A549 (cell line): ENCODE measurements at regions of chr19 and their contacts with region 1.

Region 1: DNA sequence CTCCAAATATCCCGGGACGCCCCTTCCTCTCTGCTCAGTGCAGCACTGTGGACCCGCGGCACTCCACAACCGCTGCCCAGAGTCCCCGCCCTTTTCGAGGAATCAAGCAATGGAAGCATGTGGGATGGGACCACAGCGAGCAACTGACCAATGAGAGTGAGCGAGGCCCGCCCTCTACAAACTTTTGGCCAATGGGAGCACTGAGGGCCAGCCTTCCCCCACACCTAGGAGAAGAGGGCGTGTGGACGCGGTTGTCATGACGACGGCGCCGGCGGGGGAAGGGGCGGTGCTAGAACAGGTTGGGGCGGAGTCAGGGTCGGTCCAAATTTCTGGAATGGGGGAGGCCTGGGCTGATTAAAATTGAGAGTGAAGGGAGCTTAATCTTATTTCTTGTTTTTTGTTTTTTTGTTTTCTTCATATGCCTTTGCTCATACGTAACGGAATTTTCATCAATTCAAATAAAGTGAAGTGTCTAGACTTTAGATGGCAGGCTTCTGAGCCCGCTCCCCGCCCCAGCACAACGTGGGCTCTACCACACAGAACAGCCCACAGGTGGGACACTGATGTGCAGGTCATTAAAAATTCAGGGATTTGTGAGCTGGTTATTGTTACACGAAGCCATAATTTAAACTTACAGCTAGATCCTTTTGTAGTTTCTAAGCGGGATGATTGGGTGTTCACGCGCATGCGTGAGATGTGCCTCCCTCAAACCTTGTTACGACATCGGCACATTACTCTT is at the start of gene DNAAF3:
- DNase-seq: peak; percentile 99 to 100
- ATAC-seq: peak; percentile 96 to 97
- H3K4me3 ChIP-seq: peak within 1 kb of the TSS; percentile 64
- H3K27ac ChIP-seq: peak within 1 kb of the TSS; percentile 62 to 81
- H3K4me1 ChIP-seq: peaks cover 10% of the 10 kb centered on the region; the same call in 1 of the 3 replicates
- CTCF ChIP-seq: no peak
- EP300 ChIP-seq: no peak
- POLR2A ChIP-seq: no peak
- RAD21 ChIP-seq: no peak
- polyA plus RNA-seq, gene DNAAF3: 3.1 and 4.0 TPM in 2 replicates

Region 2: DNA sequence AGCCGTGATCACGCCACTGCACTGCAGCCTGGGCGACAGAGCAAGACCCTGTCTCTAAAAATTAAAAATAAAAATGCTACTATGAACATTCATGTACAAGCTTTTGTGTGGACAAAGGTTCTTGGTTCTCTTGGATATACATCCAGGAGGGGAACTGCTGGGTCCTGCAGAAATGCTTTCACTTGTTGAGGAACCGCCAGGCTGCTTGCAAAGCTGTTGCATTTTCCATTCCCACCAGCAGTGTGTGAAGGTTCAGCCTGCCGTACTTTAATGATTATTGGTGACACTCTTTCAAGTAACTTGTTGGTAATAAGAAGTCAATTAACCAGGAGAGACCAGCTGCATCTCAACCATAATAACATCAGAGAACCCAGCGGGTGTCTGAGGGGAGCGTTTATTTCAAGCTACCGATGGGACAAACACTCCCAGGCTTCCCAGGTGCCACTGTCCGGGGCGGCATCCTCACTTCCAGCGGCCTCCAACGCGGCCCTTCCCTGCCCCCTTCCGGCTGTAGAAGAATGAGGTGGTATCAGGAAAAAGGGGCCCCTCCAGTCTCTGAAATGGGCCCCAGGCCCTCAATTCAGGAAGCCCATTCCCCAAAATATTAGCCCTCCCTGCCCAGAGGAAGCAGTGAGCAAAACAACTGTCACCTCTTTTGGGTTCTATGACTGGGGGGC is 34.1 kb before region 1 on chr19:
- CTCF ChIA-PET with region 1: interaction called, 13 read pairs
- POLR2A ChIA-PET with region 1: no interaction called
- DNase-seq: no peak
- ATAC-seq: no peak
- H3K4me3 ChIP-seq: no peak overlapping the region
- H3K27ac ChIP-seq: no peak overlapping the region
- H3K4me1 ChIP-seq: no peaks in the 10 kb centered on the region
- CTCF ChIP-seq: no peak
- EP300 ChIP-seq: no peak
- POLR2A ChIP-seq: no peak
- RAD21 ChIP-seq: no peak

Region 3: DNA sequence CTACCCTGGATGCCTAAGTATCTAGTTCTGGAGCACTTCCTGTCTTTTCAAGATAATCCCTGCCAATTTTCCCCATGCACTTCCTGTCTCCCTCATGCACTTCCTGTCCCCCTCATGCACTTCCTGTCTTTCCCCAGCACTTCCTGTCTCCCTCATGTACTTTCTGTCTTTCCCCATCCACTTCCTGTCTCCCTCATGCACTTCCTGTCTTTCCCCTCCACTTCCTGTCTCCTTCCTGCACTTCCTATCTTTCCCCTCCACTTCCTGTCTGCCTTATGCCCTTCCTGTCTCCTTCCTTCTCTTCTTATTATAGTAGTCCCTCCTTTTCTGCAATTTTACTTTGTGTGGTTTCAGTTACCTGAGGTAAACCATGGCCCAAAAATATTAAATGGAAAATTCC is 14.7 kb before region 1 on chr19:
- CTCF ChIA-PET with region 1: interaction called, 29 read pairs
- POLR2A ChIA-PET with region 1: interaction called, 9 read pairs
- DNase-seq: peak in 1 of 2 experiments; percentile 55
- ATAC-seq: no peak
- H3K4me3 ChIP-seq: no peak overlapping the region
- H3K27ac ChIP-seq: peak overlapping the region in 1 of 2 experiments; percentile 56; a peak in 2 of 6 replicates
- H3K4me1 ChIP-seq: peaks cover 29% of the 10 kb centered on the region
- CTCF ChIP-seq: no peak
- EP300 ChIP-seq: no peak
- POLR2A ChIP-seq: no peak
- RAD21 ChIP-seq: no peak

Region 4: GRCh38 chr19:55178781-55179599 is 12.3 kb after region 1 on chr19:
- CTCF ChIA-PET with region 1: interaction called, 64 read pairs
- POLR2A ChIA-PET with region 1: no interaction called
- DNase-seq: peak; percentile 91
- ATAC-seq: peak; percentile 74 to 80
- H3K4me3 ChIP-seq: peak overlapping the region; percentile 26
- H3K27ac ChIP-seq: no peak overlapping the region; a peak in 1 of 6 replicates
- H3K4me1 ChIP-seq: peaks cover 17% of the 10 kb centered on the region
- CTCF ChIP-seq: no peak
- EP300 ChIP-seq: no peak
- POLR2A ChIP-seq: no peak
- RAD21 ChIP-seq: no peak

Region 5: GRCh38 chr19:55197531-55197930 is 30.8 kb after region 1 on chr19:
- CTCF ChIA-PET with region 1: interaction called, 14 read pairs
- POLR2A ChIA-PET with region 1: no interaction called
- DNase-seq: peak in 1 of 2 experiments; percentile 63
- ATAC-seq: peak; percentile 68 to 78
- H3K4me3 ChIP-seq: no peak overlapping the region
- H3K27ac ChIP-seq: no peak overlapping the region
- H3K4me1 ChIP-seq: no peaks in the 10 kb centered on the region
- CTCF ChIP-seq: no peak
- EP300 ChIP-seq: no peak
- POLR2A ChIP-seq: no peak
- RAD21 ChIP-seq: no peak

Region 6: GRCh38 chr19:55258828-55259539 is 92.3 kb after region 1 on chr19 and contains the start of gene PPP6R1:
- CTCF ChIA-PET with region 1: interaction called, 11 read pairs
- POLR2A ChIA-PET with region 1: interaction called, 3 read pairs
- DNase-seq: peak; percentile 99 to 100
- ATAC-seq: peak; percentile 83 to 93
- H3K4me3 ChIP-seq: peak within 1 kb of the TSS; percentile 81
- H3K27ac ChIP-seq: peak within 1 kb of the TSS; percentile 87 to 95
- H3K4me1 ChIP-seq: peaks cover 36% of the 10 kb centered on the region
- CTCF ChIP-seq: no peak
- EP300 ChIP-seq: peak in 1 of 2 experiments; percentile 31; a peak in 1 of 5 replicates
- POLR2A ChIP-seq: peak; percentile 87
- RAD21 ChIP-seq: peak; percentile 44 to 61; a peak in 4 of 5 replicates
- polyA plus RNA-seq, gene PPP6R1: 42.9 and 44.6 TPM in 2 replicates

Region 7: DNA sequence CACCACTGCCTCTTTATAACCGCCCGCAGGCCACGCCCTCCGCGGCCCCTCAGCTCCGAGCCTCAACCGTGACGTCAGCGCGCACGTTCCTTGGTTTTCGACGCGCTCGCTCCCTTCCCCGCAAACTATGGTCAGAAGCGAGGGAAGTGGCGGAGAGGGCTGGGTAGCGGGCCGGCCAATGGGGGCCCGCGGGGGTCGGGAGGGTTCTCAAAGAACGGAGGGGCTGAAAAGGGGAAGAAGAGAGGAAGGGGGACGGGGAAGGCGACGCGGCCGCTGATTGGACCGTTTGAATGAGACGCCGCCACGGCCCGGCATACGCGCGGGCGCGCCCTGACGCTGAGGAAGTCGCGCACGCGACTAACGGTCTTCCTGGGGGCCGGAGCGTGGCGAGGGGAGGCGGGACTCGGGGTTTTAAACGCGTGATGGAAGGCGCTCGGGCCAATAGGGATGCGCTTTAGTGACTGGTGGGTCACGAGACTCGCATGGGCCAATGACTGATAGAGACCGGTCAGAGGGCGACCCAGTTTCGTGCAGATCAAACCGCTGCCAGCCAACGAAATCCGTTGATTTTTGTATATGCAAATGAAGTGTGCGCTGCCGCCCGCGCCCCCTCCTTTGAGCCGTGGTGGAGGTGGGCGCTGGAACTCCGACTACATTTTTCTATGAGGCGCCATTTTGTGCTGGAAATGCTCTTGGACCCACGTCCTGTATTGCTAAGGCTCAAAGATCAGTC is 241.3 kb after region 1 on chr19:
- CTCF ChIA-PET with region 1: interaction called, 3 read pairs
- POLR2A ChIA-PET with region 1: interaction called, 12 read pairs
- DNase-seq: peak; percentile 100
- ATAC-seq: peak; percentile 90 to 96
- H3K4me3 ChIP-seq: peak overlapping the region; percentile 98
- H3K27ac ChIP-seq: peak overlapping the region; percentile 95 to 97
- H3K4me1 ChIP-seq: peaks cover 36% of the 10 kb centered on the region
- CTCF ChIP-seq: no peak
- EP300 ChIP-seq: no peak
- POLR2A ChIP-seq: no peak
- RAD21 ChIP-seq: no peak